Activated naive CD4-positive, alpha-beta T cell treated with anti-CD3 and anti-CD28 coated beads, Interleukin-2, amount 10 ng/mL, durations not matched to agents 7 days and 5 days (primary cell): ENCODE measurements at regions of chr11 and their contacts with region 1.

Region 1: DNA sequence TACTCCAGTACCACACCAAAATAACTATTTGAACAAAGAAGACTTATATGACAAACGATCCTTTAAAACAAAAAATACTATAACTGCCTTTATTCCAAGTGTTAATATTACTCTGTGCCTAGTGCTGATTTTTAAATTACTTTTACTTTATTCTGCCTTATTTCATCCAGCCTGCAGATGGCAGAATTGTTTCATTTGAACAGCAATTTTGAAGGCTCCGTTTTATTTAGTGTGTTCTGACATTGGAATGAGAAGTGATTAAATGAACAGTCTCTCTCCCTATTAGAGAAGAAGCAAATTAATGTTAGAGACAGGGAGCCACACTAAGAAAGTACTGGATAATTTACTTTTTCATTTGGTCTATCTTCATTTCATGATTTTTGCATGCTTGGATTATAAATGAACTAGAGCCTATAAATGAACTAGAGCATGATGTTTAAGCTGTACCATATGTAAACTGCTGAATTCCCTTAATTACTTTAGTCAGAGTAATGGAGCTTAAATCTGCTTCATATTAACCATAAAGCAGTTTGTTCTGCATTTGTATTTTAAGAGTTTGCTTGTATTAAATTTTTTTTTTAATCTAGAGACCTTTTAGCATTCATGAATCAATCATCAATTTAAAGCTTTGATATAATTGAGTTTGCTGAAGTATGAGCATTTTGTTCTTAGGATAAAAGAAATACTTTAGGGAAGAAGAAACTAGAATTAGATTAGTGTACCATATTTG is 9.8 kb downstream of the PDHX start:
- DNase-seq: no peak
- H3K4me3 Mint-ChIP-seq: no peak overlapping the region
- H3K27ac Mint-ChIP-seq: no peak overlapping the region
- H3K4me1 Mint-ChIP-seq: peaks cover 7% of the 10 kb centered on the region
- H3K27me3 Mint-ChIP-seq: no peaks in the 10 kb centered on the region

Region 2: DNA sequence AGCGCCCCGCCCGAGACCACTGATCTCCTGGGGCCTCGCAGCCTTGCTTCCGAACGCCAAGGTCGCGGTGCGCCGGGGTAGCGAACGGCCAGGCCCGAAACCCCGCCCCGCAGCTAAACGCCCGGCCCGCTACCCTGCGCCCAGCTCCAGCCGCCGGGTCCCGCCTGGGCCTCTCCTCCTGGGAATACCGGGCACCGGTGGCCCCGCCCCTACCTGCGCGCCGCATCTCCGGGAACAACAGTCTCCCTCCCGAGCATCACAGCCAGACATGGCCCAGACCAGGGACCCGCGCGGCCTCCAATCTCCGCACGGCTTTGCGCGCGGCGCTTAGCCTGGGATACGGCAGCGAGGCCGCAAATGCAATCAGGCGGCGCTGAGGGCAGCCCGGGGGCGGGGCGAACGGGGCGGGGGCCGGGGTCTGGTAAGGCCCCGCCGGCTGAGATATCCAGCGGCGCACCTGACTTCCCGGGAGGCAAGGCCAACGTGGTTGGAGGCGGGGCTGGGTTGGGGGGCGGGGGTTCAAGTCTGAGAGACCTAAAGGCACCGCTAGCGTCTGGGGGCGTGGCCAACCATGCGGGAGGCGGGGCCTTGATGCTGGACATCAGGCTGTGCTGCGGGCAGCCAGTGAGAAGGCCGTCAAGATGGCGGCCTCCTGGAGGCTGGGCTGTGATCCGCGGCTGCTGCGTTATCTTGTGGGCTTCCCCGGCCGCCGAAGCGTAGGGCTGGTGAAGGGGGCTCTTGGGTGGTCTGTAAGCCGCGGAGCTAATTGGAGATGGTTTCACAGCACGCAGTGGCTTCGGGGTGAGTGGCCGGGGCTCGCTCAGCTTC is 10.0 kb before region 1 on chr11 and contains the starts of genes APIP and PDHX:
- CTCF ChIA-PET with region 1: interaction called, 13 read pairs
- DNase-seq: peak; percentile 96
- H3K4me3 Mint-ChIP-seq: peak within 1 kb of the TSS; percentile 88
- H3K27ac Mint-ChIP-seq: peak within 1 kb of the TSS; percentile 89
- H3K4me1 Mint-ChIP-seq: peaks cover 35% of the 10 kb centered on the region
- H3K27me3 Mint-ChIP-seq: no peaks in the 10 kb centered on the region

Region 3: GRCh38 chr11:35138943-35139721 is 212.9 kb after region 1 on chr11 and contains the start of gene CD44:
- CTCF ChIA-PET with region 1: interaction called, 10 read pairs
- DNase-seq: peak; percentile 81
- H3K4me3 Mint-ChIP-seq: peak within 1 kb of the TSS; percentile 88
- H3K27ac Mint-ChIP-seq: peak within 1 kb of the TSS; percentile 94
- H3K4me1 Mint-ChIP-seq: peaks cover 48% of the 10 kb centered on the region
- H3K27me3 Mint-ChIP-seq: peaks cover 3% of the 10 kb centered on the region

Region 4: GRCh38 chr11:35237860-35238715 is 311.8 kb after region 1 on chr11:
- CTCF ChIA-PET with region 1: interaction called, 18 read pairs
- DNase-seq: peak; percentile 58
- H3K4me3 Mint-ChIP-seq: no peak overlapping the region
- H3K27ac Mint-ChIP-seq: no peak overlapping the region
- H3K4me1 Mint-ChIP-seq: peaks cover 78% of the 10 kb centered on the region
- H3K27me3 Mint-ChIP-seq: peaks cover 14% of the 10 kb centered on the region

Region 5: DNA sequence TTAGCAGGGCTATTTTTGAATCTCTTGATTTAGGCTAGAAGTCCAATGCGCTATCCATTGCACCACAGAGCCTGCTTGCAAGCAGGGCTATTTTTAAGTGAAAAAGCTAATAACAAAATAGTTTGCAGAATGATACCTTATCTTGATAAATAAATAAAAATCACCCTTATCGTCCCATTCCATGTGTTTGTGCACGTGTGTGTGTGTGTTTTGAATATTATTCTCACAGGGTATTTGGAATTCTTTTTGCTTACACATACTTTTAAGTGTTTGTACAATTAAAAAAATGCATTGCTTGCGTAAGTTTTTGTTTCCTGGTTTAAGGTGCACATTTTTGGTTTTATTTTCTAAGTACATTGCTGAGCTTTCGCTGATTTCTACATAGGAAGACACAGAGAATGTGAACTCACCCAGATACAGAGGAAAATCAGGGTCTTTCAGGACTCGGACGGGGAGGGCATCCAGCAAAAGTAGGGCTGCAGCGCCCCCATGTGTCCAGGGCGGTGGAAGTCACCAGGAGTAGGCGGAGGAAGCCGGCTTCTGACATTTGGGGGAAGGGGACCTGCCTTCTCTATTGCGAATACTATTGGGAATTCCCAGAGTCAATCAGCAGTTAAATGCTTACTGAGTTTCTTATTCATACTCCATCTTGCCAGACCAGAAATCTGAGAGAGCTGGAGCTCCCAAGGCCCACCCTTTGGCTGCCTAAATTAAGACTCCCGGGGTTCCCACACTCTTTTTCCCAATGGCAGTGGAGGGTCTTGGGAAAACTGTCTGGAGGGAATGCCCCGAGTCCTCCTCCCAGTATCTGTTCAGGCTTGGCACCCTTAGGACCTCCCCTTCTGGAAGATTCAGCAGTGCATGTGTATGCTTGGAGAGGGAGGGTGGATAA is 465.9 kb after region 1 on chr11:
- CTCF ChIA-PET with region 1: interaction called, 97 read pairs
- DNase-seq: peak; percentile 89
- H3K4me3 Mint-ChIP-seq: no peak overlapping the region
- H3K27ac Mint-ChIP-seq: no peak overlapping the region
- H3K4me1 Mint-ChIP-seq: peaks cover 26% of the 10 kb centered on the region
- H3K27me3 Mint-ChIP-seq: peaks cover 28% of the 10 kb centered on the region